ENCODE measurements at regions of chr11 and their contacts with region 1.

Region 1: GRCh38 chr11:104897891-104898684 is at the start of gene CASP12:
- DNase-seq: no peak
- ATAC-seq: peak; percentile 5
- H3K4me3 Mint-ChIP-seq: peak within 1 kb of the TSS; percentile 54
- H3K27ac Mint-ChIP-seq: peak within 1 kb of the TSS; percentile 42
- H3K4me1 Mint-ChIP-seq: peaks cover 32% of the 10 kb centered on the region
- H3K27me3 Mint-ChIP-seq: no peaks in the 10 kb centered on the region
- CTCF ChIP-seq: no peak
- total RNA-seq, gene CASP12: not detected in 2 replicates

Region 2: GRCh38 chr11:104546501-104546900 is 351.6 kb before region 1 on chr11:
- CTCF ChIA-PET with region 1: no interaction called
- POLR2A ChIA-PET with region 1: no interaction called
- intact Hi-C with region 1: no loop called
- DNase-seq: no peak
- ATAC-seq: no peak
- H3K4me3 Mint-ChIP-seq: no peak overlapping the region
- H3K27ac Mint-ChIP-seq: no peak overlapping the region
- H3K4me1 Mint-ChIP-seq: no peaks in the 10 kb centered on the region
- H3K27me3 Mint-ChIP-seq: no peaks in the 10 kb centered on the region
- CTCF ChIP-seq: no peak

Region 3: DNA sequence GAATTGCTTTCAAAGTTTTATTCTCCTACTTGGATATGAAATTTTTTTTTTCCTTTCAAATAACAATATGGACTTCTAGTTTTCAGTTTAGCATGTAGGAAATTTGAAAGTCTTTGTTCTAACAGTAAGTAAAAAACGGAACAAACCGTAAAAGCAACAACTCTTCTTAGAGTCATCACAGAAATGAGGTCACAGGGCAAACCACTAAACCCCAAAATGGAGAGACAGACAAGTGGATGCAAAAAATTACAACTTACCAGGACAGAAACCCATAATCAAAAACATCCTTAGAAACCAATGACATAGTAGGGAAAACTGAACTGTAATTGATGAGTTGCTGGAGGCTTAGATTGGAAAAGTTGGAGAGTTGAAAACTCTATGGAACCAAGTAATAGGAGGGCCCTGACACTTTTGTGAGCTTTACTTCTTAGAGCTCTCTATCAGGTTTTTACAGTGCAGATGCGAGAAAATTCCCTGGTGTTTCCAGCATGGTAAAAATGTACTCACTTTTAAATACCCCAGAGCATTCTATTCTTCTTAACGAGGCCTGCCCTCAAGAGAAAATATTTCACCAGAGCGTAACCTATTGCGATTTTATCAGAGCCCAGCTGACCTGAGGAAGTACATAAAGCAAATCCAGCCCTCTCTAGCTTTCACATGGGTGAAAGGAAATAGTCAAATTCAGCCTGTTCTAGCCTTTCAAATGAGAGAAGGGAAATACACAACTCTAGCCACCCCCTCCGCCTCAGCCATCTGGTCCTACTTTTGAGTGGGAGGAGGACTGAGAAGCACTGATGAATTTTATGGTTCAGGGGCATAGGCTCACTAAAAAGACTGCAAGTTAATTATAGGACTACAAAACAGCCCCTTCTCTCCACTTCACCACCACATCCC is 39.0 kb before region 1 on chr11:
- CTCF ChIA-PET with region 1: no interaction called
- POLR2A ChIA-PET with region 1: no interaction called
- intact Hi-C with region 1: loop called (anchors 1 kb)
- DNase-seq: peak; percentile 18
- ATAC-seq: peak; percentile 92
- H3K4me3 Mint-ChIP-seq: peak overlapping the region; percentile 68
- H3K27ac Mint-ChIP-seq: peak overlapping the region; percentile 87
- H3K4me1 Mint-ChIP-seq: peaks cover 34% of the 10 kb centered on the region
- H3K27me3 Mint-ChIP-seq: no peaks in the 10 kb centered on the region
- CTCF ChIP-seq: no peak

Region 4: DNA sequence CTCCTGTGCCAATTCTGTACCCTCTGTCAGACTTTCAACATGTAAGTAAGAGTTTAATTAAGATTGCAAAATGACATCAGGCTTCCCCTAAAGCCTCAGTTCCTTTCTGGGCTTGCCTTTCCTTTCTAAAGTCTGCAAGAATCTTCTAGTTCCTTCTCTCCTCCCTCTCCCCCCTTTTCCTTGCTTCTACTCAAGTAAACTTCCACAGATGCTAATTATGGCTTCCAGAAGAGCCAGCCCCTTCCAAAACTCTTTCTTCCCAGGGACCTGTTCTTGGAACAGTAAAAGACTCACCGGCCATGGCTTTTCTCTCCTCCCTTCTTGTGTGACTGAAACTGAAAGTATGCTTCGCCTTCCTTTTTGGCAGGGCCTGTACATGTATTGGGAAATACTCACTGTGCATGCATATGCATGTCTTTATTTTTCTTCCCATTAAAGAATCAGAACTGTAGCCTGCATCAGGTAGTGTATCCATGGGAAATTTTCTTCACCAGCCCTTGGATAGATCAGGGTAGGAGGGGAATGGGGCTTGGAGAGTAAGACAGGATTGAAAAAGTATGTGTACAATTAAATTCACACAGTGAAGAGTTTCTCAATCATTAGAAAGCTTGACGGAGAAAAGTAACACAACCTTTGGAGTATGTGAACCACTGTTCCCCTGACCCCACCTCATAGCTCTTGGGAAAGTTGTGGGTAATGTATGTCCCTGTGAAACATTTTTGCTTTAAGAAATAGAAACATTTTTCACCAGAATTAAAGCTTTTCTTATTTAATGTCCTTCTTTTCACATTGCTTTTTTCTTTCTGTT is 136.9 kb after region 1 on chr11 and contains the start of gene CASP1:
- CTCF ChIA-PET with region 1: no interaction called
- POLR2A ChIA-PET with region 1: no interaction called
- intact Hi-C with region 1: no loop called
- DNase-seq: no peak
- ATAC-seq: peak; percentile 82
- H3K4me3 Mint-ChIP-seq: peak within 1 kb of the TSS; percentile 94
- H3K27ac Mint-ChIP-seq: peak within 1 kb of the TSS; percentile 95
- H3K4me1 Mint-ChIP-seq: peaks cover 43% of the 10 kb centered on the region
- H3K27me3 Mint-ChIP-seq: no peaks in the 10 kb centered on the region
- CTCF ChIP-seq: no peak
- total RNA-seq, gene CASP1: 35.7 and 47.0 TPM in 2 replicates